ENCODE measurements at regions of chr1 and their contacts with region 1.

Region 1: GRCh38 chr1:55257958-55258357 is 42.8 kb upstream of the USP24 start:
- DNase-seq: peak; percentile 91
- H3K4me3 Mint-ChIP-seq: peak overlapping the region; percentile 19
- H3K27ac Mint-ChIP-seq: peak overlapping the region; percentile 58
- H3K4me1 Mint-ChIP-seq: peaks cover 16% of the 10 kb centered on the region
- H3K27me3 Mint-ChIP-seq: peaks cover 12% of the 10 kb centered on the region

Region 2: DNA sequence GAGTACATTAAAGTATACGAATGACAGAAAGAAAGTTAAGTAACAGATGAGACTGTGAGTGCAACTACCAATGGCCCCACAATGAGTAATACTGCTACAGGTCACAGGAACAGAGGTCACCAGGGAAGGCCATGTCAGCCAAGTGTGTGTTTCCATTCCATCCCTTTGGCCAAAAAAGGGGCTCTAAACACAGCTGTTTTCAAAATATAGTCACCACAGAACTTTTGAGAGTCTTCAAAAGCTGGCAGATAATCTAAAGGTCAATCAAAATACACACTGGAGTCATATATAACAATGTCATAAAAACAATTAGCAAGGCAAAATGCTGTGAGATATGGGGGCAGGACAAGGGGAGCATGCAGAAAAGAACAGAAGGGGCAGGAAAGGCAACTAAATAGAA is 53.0 kb before region 1 on chr1:
- intact Hi-C with region 1: loop called (anchors 5 kb)
- DNase-seq: peak; percentile 52
- H3K4me3 Mint-ChIP-seq: no peak overlapping the region
- H3K27ac Mint-ChIP-seq: peak overlapping the region; percentile 3
- H3K4me1 Mint-ChIP-seq: peaks cover 46% of the 10 kb centered on the region
- H3K27me3 Mint-ChIP-seq: no peaks in the 10 kb centered on the region

Region 3: DNA sequence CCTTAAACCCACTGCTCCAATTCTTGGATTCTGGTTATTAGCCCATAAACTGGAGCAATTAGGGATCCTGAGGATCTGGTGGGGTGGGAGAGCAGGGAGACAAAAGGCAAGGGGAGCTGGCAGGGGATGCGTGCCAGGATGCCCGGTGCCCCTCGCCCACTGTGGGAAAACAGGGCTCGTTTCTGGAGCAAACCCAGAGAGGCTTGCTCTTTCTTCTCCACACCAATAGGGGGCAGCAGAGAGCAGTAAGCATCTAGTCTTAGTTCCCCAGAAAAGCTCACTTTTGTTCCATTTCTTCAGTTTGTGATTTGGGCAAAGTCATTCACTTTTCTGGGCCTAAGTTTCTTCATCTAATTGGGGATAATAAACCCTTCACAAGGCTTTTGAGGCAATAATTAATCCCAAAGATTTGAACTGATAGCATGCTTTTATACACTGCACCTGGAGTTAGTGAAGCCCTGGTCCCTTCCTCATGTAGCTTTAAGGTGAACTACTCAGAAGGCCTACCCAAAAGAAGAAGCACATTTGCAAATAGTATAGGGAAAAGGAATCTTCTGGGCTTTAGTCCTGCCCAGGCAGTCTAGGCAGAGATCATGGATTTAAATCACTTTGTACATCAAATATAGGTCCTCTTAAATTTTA is 117.8 kb after region 1 on chr1:
- intact Hi-C with region 1: no loop called
- DNase-seq: peak; percentile 77
- H3K4me3 Mint-ChIP-seq: no peak overlapping the region
- H3K27ac Mint-ChIP-seq: no peak overlapping the region
- H3K4me1 Mint-ChIP-seq: peaks cover 10% of the 10 kb centered on the region
- H3K27me3 Mint-ChIP-seq: peaks cover 2% of the 10 kb centered on the region

Measured in activated CD4-positive, alpha-beta T cell treated with anti-CD3 and anti-CD28 coated beads, Interleukin-2, amount 10 ng/mL, durations not matched to agents 24 days and 14 days (primary cell).